OCI-LY7 (cell line): ENCODE measurements at regions of chr1 and their contacts with region 1.

Region 1: GRCh38 chr1:199684686-199685273 is 342.7 kb upstream of the NR5A2 start:
- DNase-seq: peak; percentile 62
- H3K4me3 ChIP-seq: no peak overlapping the region
- H3K27ac ChIP-seq: no peak overlapping the region
- H3K4me1 ChIP-seq: no peaks in the 10 kb centered on the region
- CTCF ChIP-seq: peak; percentile 93

Region 2: GRCh38 chr1:200038981-200039848 is 354.4 kb after region 1 on chr1:
- CTCF ChIA-PET with region 1: no interaction called
- POLR2A ChIA-PET with region 1: no interaction called
- intact Hi-C with region 1: loop called (anchors 10 kb)
- DNase-seq: peak; percentile 31
- H3K4me3 ChIP-seq: peak overlapping the region; percentile 68
- H3K27ac ChIP-seq: no peak overlapping the region
- H3K4me1 ChIP-seq: peaks cover 6% of the 10 kb centered on the region
- CTCF ChIP-seq: no peak

Region 3: GRCh38 chr1:200139661-200140250 is 455.0 kb after region 1 on chr1:
- CTCF ChIA-PET with region 1: no interaction called
- POLR2A ChIA-PET with region 1: no interaction called
- intact Hi-C with region 1: loop called (anchors 5 kb)
- DNase-seq: peak; percentile 82
- H3K4me3 ChIP-seq: no peak overlapping the region
- H3K27ac ChIP-seq: no peak overlapping the region
- H3K4me1 ChIP-seq: peaks cover 8% of the 10 kb centered on the region
- CTCF ChIP-seq: peak; percentile 97

Region 4: GRCh38 chr1:200279810-200280411 is 595.1 kb after region 1 on chr1:
- CTCF ChIA-PET with region 1: interaction called, 3 read pairs
- POLR2A ChIA-PET with region 1: interaction called, 5 read pairs
- intact Hi-C with region 1: loop called (anchors 2 kb)
- DNase-seq: peak; percentile 46
- H3K4me3 ChIP-seq: no peak overlapping the region
- H3K27ac ChIP-seq: no peak overlapping the region
- H3K4me1 ChIP-seq: peaks cover 9% of the 10 kb centered on the region
- CTCF ChIP-seq: peak; percentile 82

Region 5: GRCh38 chr1:200488375-200489165 is 803.8 kb after region 1 on chr1:
- CTCF ChIA-PET with region 1: no interaction called
- POLR2A ChIA-PET with region 1: interaction called, 3 read pairs
- intact Hi-C with region 1: loop called (anchors 1 kb)
- DNase-seq: peak; percentile 74
- H3K4me3 ChIP-seq: no peak overlapping the region
- H3K27ac ChIP-seq: no peak overlapping the region
- H3K4me1 ChIP-seq: no peaks in the 10 kb centered on the region
- CTCF ChIP-seq: peak; percentile 95

Region 6: GRCh38 chr1:200510228-200510623 is 825.4 kb after region 1 on chr1:
- CTCF ChIA-PET with region 1: interaction called, 4 read pairs
- POLR2A ChIA-PET with region 1: interaction called, 3 read pairs
- intact Hi-C with region 1: loop called (anchors 1 kb)
- DNase-seq: peak; percentile 82
- H3K4me3 ChIP-seq: no peak overlapping the region
- H3K27ac ChIP-seq: no peak overlapping the region
- H3K4me1 ChIP-seq: no peaks in the 10 kb centered on the region
- CTCF ChIP-seq: peak; percentile 99